Activated B cell treated with CpG ODN at 0.5 μM for 24 hours (primary cell): ENCODE measurements at regions of chr11 and their contacts with region 1.

Region 1: GRCh38 chr11:47204637-47204989 is 10.2 kb upstream of the DDB2 start:
- DNase-seq: no peak
- ATAC-seq: no peak
- H3K4me3 Mint-ChIP-seq: no peak overlapping the region
- H3K27ac Mint-ChIP-seq: no peak overlapping the region
- H3K4me1 Mint-ChIP-seq: no peaks in the 10 kb centered on the region
- H3K27me3 Mint-ChIP-seq: no peaks in the 10 kb centered on the region
- CTCF ChIP-seq: no peak

Region 2: GRCh38 chr11:46826310-46827044 is 378.1 kb before region 1 on chr11:
- CTCF ChIA-PET with region 1: no interaction called
- POLR2A ChIA-PET with region 1: interaction called, 11 read pairs
- intact Hi-C with region 1: no loop called
- DNase-seq: peak; percentile 66
- ATAC-seq: peak; percentile 100
- H3K4me3 Mint-ChIP-seq: peak overlapping the region; percentile 82
- H3K27ac Mint-ChIP-seq: peak overlapping the region; percentile 41
- H3K4me1 Mint-ChIP-seq: peaks cover 19% of the 10 kb centered on the region
- H3K27me3 Mint-ChIP-seq: no peaks in the 10 kb centered on the region
- CTCF ChIP-seq: no peak